ENCODE measurements at regions of chr16 and their contacts with region 1.

Region 1: GRCh38 chr16:12455287-12455798 is 348.3 kb downstream of the CPPED1 start:
- DNase-seq: peak; percentile 18
- H3K4me3 Mint-ChIP-seq: no peak overlapping the region
- H3K27ac Mint-ChIP-seq: no peak overlapping the region
- H3K4me1 Mint-ChIP-seq: peaks cover 44% of the 10 kb centered on the region
- H3K27me3 Mint-ChIP-seq: no peaks in the 10 kb centered on the region

Region 2: DNA sequence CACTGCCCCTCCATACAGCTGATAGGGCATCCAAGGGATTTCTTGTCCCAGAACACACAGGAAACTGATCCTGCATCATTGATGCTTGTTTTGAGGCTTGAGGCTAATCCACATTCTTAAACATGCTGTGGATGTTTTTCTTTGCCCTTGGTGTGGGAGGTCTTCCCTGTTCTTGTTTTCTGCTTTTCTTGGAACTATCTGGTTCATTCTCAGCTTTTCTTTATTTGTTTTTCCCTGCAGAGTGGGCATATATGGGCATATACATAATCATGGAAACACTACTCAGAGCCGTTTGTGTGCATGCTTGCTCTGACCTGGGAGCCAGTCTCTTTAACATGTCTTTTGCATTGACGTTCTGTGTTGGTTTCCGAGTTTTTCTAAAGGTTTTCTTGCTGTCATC is 178.8 kb before region 1 on chr16:
- intact Hi-C with region 1: no loop called
- DNase-seq: no peak
- H3K4me3 Mint-ChIP-seq: no peak overlapping the region
- H3K27ac Mint-ChIP-seq: no peak overlapping the region
- H3K4me1 Mint-ChIP-seq: no peaks in the 10 kb centered on the region
- H3K27me3 Mint-ChIP-seq: no peaks in the 10 kb centered on the region

Region 3: DNA sequence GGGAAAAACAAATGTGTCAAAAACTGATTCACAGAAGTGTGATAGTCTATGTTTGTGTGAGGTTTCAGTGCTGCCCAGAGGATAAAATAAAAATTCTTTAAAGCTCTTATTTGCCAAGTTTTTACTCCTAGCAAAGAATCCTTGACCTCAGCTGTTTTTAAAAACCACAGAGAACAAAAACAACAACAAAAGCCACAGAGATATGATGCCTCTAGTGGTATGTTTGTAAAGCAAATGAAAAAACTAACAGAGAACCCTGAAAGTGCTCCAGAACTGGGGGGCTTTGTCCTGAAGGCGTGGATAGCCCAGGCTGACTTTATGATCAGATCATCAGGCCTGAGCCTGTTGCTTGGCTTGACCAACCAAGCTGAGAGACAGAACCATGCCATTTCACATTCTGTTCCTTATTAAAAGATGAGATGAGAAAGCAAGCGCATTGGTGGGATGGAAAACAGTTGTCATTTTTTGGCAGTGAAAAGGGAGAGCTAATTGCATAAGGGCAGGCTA is 62.7 kb before region 1 on chr16:
- intact Hi-C with region 1: loop called (anchors 10 kb)
- DNase-seq: no peak
- H3K4me3 Mint-ChIP-seq: no peak overlapping the region
- H3K27ac Mint-ChIP-seq: no peak overlapping the region
- H3K4me1 Mint-ChIP-seq: no peaks in the 10 kb centered on the region
- H3K27me3 Mint-ChIP-seq: no peaks in the 10 kb centered on the region

Region 4: DNA sequence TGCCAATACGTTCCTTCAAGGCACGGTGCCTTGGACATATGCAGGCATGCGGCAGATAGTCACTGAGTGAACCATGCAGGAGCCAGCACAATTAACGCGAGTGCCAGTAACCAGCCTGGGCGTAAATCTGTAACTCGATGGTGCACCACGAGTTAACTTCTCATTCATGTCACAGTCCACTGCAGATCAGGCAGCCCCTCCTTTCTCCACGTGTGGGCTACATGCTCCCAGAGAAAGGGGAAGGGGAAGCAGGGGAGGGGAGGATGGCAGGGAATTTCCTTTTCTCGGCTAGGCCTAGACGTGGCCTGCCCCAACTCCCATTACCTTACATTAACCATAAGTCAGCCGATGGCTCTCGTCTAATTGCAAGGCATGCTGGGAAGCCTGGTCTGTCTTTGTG is 60.4 kb after region 1 on chr16:
- intact Hi-C with region 1: no loop called
- DNase-seq: no peak
- H3K4me3 Mint-ChIP-seq: no peak overlapping the region
- H3K27ac Mint-ChIP-seq: no peak overlapping the region
- H3K4me1 Mint-ChIP-seq: peaks cover 6% of the 10 kb centered on the region
- H3K27me3 Mint-ChIP-seq: no peaks in the 10 kb centered on the region

Region 5: DNA sequence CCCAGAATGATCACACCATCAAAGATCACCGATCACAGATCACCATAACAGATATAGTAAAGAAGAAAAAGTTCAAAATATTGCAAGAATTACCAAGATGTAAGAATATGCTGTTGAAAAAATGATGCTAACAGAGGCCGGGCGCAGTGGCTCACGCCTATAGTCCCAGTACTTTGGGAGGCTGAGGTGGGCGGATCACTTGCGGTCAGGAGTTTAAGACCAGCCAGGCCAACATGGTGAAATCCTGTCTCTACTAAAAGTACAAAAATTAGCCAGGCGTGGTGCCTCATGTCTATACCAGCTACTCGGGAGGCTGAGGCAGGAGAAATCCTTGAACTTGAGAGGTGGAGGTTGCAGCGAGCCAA is 295.2 kb after region 1 on chr16:
- intact Hi-C with region 1: loop called (anchors 2 kb)
- DNase-seq: no peak
- H3K4me3 Mint-ChIP-seq: peak overlapping the region; percentile 58
- H3K27ac Mint-ChIP-seq: peak overlapping the region; percentile 77
- H3K4me1 Mint-ChIP-seq: peaks cover 33% of the 10 kb centered on the region
- H3K27me3 Mint-ChIP-seq: no peaks in the 10 kb centered on the region

Region 6: GRCh38 chr16:12819126-12820117 is 364.1 kb after region 1 on chr16:
- intact Hi-C with region 1: loop called (anchors 1 kb)
- DNase-seq: peak; percentile 64
- H3K4me3 Mint-ChIP-seq: no peak overlapping the region
- H3K27ac Mint-ChIP-seq: no peak overlapping the region
- H3K4me1 Mint-ChIP-seq: peaks cover 12% of the 10 kb centered on the region
- H3K27me3 Mint-ChIP-seq: peaks cover 6% of the 10 kb centered on the region

Region 7: DNA sequence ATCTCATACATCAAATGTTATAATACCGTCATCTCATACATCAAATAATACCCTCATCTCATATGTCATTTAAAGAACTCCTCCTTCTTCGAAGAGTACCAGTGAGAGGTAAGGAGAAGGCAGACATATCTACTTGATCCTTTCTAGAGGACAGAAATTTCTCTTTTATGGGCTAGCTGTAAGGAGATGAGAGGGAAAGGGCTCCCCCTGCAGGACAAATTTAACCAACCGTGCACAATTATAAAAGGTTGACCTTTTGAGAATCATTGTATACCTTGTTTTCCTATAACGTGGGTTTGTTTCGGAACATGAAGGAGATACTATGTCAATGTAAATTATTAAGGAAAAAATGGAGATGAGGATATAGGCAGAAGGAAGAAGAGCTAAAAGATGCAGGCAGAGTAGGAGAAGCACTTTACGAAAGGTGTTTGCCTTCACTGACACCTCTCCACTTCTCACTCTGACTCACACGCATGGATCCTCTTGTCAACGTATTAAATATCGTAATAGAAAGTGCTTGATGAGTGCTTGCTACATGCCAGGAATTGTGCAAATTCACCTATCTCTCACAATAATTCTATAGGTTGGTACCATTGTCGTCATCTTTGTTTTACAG is 998.7 kb after region 1 on chr16:
- intact Hi-C with region 1: loop called (anchors 2 kb)
- DNase-seq: no peak
- H3K4me3 Mint-ChIP-seq: no peak overlapping the region
- H3K27ac Mint-ChIP-seq: no peak overlapping the region
- H3K4me1 Mint-ChIP-seq: no peaks in the 10 kb centered on the region
- H3K27me3 Mint-ChIP-seq: no peaks in the 10 kb centered on the region